Left cardiac atrium (tissue), 4 donors: ENCODE measurements at regions of chr17 and their contacts with region 1.

Region 1: GRCh38 chr17:69607162-69607834 is 192.8 kb downstream of the MAP2K6 start:
- DNase-seq: peak; percentile 83
- ATAC-seq: peak; percentile 86 to 88

Region 2: DNA sequence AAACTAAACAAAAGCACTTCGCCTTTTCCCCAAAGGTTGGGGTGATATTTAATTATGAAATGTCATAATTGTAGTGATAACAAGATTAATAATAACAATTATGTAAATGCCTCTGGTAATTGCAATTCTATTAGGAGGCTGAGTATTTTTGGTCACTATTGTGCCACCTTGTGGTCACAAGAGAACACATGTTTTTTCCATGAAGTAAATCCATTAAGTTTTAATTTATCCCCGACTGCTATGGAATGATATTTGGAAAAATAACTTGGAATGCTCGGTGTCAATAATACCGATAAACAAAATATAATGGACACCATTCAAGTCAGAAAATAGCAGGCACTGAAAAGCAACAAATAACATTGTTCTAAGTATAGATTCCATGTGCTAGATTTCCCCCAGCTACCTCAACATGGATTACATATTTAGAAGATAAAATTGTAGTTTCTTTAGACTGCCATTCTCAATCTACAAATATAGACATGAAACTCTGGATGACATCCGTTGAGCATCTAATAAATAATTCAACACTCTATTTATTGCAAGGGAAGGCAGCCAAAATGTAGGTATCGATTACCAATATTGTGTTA is 537.1 kb after region 1 on chr17:
- intact Hi-C with region 1: loop called (anchors 2 to 10 kb)
- DNase-seq: no peak
- ATAC-seq: no peak

Region 3: DNA sequence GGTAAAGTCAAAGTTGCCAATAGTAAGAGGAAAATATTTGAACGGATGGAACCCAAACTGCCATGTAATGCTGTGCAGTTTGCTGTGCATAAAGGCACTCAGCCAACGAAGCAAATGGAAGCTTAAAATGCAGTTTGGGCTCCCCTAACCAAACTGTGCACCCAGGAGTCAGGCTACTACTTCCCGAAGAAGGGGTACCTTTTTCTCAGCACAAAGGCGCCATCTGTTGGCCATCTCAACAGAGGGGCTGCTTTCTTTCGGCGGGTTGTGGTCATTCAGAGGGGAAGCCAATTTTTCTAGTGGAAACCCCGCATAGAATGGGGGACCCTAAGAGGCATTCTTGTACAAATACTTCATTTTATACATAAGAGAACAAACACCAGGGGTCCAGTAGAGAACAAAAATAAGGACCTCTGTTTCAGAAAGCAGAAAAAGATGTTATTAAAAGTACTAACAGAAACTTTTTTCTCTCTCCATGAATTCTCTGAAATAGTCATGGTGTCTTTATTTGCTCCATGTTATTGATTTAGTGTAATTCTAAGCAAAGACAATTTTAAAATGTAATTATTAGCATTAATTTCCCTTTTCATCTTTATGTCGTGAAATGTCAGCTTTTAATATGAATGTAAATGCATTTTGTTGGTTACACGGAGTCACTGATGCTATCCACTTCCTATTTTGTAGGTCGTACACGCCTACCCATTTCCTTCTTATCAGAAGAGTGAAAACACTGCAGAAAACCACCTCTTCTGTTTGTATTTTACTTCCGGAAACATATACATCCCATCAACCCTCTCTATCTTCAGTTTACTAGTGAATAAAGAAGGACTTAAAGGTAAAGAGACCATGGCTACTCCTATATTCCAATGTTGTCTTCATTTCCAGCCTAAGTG is 1015.3 kb after region 1 on chr17:
- intact Hi-C with region 1: loop called in 1 of 2 experiments (anchors 5 kb)
- DNase-seq: peak; percentile 40
- ATAC-seq: peak in 1 of 2 donors; percentile 37